Lower lobe of right lung (tissue), 2 donors: ENCODE measurements at regions of chr18 and their contacts with region 1.

Region 1: GRCh38 chr18:286515-287310 is 18.9 kb upstream of the THOC1 start:
- DNase-seq: no peak
- ATAC-seq: peak in 1 of 2 donors; percentile 44
- H3K4me3 ChIP-seq: no peak overlapping the region
- H3K27ac ChIP-seq: no peak overlapping the region
- H3K4me1 ChIP-seq: no peaks in the 10 kb centered on the region
- H3K27me3 ChIP-seq: no peaks in the 10 kb centered on the region
- CTCF ChIP-seq: peak; percentile 33

Region 2: GRCh38 chr18:616380-616995 is 329.8 kb after region 1 on chr18:
- intact Hi-C with region 1: loop called (anchors 10 kb)
- DNase-seq: no peak
- ATAC-seq: peak; percentile 81 to 85
- H3K4me3 ChIP-seq: no peak overlapping the region
- H3K27ac ChIP-seq: no peak overlapping the region
- H3K4me1 ChIP-seq: peaks cover 16% of the 10 kb centered on the region
- H3K27me3 ChIP-seq: no peaks in the 10 kb centered on the region
- CTCF ChIP-seq: peak; percentile 68